HEK293 (cell line): ENCODE measurements at regions of chr19 and their contacts with region 1.

Region 1: DNA sequence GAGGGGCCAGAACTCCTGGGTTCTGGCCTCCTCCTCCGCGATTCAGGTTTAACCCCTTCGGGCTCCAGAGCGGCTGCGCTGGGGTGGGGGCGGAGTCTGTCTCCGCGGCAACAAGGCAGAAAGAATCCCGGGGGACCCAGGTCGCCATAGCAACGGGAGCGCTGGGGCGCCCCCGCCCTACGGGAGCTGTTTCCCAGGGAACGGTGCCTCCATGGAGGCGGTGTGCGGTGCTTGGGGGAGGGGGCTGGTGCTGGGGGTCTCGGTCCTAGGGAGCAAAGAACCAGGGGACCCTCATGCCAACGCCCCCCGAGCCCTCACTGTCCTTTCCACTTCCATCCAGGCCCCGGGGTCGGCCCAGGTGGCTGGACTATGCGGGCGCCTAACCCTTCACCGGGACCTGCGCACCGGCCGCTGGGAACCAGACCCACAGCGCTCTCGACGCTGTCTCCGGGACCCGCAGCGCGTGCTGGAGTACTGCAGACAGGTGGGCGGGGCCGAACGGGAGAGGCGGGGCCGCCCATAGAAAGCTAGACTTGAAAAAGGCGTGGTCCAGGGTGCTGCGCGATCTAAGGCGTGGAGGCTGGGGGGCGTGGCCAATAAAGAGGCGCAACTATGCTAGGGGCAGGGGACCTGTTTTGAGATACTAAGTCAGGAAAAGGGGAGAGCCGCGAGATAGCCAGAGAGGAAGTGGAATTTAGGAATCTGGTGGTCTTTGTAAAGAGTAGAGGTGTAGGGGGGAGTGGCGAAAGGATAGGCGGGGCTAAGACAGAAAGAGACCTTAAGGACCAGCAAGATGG is 1.2 kb downstream of the APLP1 start:
- H3K4me3 ChIP-seq: peak overlapping the region; percentile 16; the same call in 1 of the 2 replicates
- H3K27ac ChIP-seq: peak overlapping the region; percentile 34; the same call in 1 of the 2 replicates
- H3K4me1 ChIP-seq: peaks cover 16% of the 10 kb centered on the region
- CTCF ChIP-seq: 0 out of 2 replicates have a peak, but pooled peaks have one; percentile 52

Region 2: GRCh38 chr19:35856546-35857149 is 12.9 kb before region 1 on chr19 and contains the start of gene KIRREL2:
- CTCF ChIA-PET with region 1: interaction called, 3 read pairs
- POLR2A ChIA-PET with region 1: interaction called, 11 read pairs
- H3K4me3 ChIP-seq: no peak within 1 kb of the TSS
- H3K27ac ChIP-seq: no peak within 1 kb of the TSS
- H3K4me1 ChIP-seq: no peaks in the 10 kb centered on the region
- CTCF ChIP-seq: no peak

Region 3: GRCh38 chr19:35937345-35938281 is 68.1 kb after region 1 on chr19:
- CTCF ChIA-PET with region 1: no interaction called
- POLR2A ChIA-PET with region 1: no interaction called
- H3K4me3 ChIP-seq: peak overlapping the region; percentile 49
- H3K27ac ChIP-seq: no peak overlapping the region; the same call in 1 of the 2 replicates
- H3K4me1 ChIP-seq: peaks cover 26% of the 10 kb centered on the region
- CTCF ChIP-seq: no peak